ENCODE measurements at regions of chr12 and their contacts with region 1.

Region 1: DNA sequence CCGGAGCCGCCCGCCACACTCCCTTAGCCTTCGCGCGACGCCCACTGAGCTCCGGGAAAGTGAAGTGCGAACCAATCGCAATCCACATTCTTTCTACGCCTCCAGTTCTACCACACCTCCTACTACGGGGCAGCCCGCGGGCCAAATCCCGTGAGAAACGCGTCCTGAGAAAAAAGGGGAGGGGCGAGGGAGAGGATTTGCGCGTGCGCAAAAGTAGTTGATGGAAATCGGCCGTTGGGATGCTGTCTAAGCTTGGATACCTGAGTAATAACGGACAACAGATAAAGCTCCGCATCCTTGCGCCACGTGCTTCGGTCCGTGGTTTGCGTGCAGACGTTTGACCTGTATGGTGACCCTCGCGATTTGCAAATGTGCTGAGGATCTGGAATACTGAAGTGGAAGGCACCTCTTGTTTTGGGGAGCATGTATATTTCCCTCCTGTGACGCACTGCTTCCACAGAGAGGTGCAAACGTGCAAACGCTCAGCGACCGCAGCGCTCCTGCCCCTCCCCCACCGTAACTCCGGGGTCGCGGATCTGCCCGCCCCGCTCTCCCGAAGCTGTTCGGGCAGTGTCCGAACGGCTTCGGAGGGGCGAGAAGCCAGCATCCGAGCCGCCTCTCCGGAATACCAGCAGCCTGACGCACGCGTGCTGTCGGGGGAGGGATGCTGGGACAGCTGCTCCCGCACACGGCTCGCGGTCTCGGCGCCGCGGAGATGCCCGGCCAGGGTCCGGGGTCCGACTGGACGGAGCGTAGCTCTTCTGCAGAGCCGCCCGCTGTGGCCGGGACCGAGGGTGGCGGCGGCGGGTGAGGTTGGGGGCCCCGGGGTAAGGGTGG is at the starts of genes FAM216A and GPN3:
- DNase-seq: peak; percentile 97 to 98
- H3K4me3 ChIP-seq: peak within 1 kb of the TSS; percentile 62
- H3K4me3 Mint-ChIP-seq: peak within 1 kb of the TSS; percentile 82
- H3K27ac Mint-ChIP-seq: peak within 1 kb of the TSS; percentile 94
- H3K4me1 ChIP-seq: no peaks in the 10 kb centered on the region
- H3K4me1 Mint-ChIP-seq: no peaks in the 10 kb centered on the region
- H3K27me3 ChIP-seq: no peaks in the 10 kb centered on the region
- H3K27me3 Mint-ChIP-seq: no peaks in the 10 kb centered on the region
- CTCF ChIP-seq: no peak
- total RNA-seq, gene FAM216A: 13.1 and 15.9 TPM in 2 replicates
- total RNA-seq, gene GPN3: 35.0 and 39.0 TPM in 2 replicates

Region 2: DNA sequence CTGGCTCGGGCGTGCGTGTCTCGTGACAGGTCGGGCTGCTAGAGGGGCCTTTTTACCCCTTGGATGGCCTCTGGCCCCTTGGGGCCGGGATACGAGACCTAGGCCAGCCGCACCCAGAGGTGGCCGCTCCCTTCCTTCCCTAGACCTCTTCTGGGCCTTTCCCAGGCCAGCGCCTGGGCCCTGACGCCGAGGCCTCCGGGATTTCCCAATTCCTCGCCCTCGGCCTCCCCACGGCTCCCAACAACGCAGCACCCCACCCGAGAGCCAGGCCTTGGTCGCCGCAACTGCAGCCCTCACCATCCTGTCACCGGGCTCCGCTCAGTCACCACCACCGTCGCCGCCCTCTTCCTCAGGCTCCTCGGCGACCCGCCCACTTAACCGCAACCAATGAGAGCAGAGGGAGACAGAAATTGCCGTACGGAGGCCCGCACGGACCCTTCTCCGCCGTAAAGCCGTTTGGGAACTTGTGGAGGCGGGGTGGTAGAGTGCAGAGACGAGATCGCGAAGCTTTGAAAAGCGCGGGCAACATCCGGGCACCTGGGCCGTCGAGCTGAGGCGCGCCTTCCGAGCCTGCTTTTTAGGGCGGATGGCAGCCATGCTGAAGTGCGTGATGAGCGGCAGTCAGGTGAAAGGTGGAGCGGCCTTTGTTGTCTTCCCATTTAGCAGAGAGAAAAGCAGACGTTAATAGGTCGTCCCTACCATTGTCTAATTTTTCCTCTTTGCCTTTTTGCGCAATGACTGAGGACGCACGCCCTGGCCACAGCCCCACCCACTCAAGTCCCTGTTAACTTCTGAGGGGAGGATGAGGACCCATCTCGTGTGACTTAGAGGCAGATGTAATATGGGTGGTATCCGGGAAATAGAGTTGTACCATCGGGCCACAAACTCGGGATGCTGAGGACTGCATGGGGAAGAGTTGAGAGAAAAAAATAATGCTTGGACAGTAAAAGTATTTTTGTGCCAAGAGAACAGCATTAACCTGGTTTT is 33.6 kb after region 1 on chr12 and contains the starts of genes RAD9B and VPS29:
- CTCF ChIA-PET with region 1: interaction called, 5 read pairs
- POLR2A ChIA-PET with region 1: interaction called, 36 read pairs
- intact Hi-C with region 1: loop called (anchors 1 kb)
- DNase-seq: peak; percentile 99
- H3K4me3 ChIP-seq: peak within 1 kb of the TSS; percentile 55
- H3K4me3 Mint-ChIP-seq: peak within 1 kb of the TSS; percentile 95
- H3K27ac Mint-ChIP-seq: peak within 1 kb of the TSS; percentile 97
- H3K4me1 ChIP-seq: peaks cover 21% of the 10 kb centered on the region
- H3K4me1 Mint-ChIP-seq: no peaks in the 10 kb centered on the region
- H3K27me3 ChIP-seq: no peaks in the 10 kb centered on the region
- H3K27me3 Mint-ChIP-seq: no peaks in the 10 kb centered on the region
- CTCF ChIP-seq: no peak
- total RNA-seq, gene RAD9B: 2.8 and 3.8 TPM in 2 replicates
- total RNA-seq, gene VPS29: 127 and 132 TPM in 2 replicates

Region 3: DNA sequence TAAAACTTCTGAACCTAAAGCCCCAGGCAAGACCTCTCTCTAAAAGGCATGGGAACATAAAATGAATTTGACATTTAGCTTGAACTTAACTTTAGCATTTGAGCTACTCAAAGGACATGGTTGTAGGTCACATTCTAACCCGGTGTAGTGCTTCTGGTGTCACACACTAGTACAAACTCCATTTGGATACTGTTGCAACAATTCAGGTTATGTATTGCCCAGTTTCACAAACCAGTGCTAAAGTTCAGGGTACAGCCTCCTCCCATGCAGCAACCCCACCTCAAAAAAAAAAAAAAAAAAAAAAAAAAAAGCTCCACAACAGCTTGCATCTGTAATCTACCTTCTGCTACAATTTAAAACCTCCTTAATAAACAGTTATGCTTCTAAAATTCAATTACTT is 106.9 kb after region 1 on chr12:
- CTCF ChIA-PET with region 1: interaction called, 7 read pairs
- POLR2A ChIA-PET with region 1: interaction called, 13 read pairs
- intact Hi-C with region 1: no loop called
- DNase-seq: peak; percentile 46 to 63
- H3K4me3 ChIP-seq: no peak overlapping the region
- H3K4me3 Mint-ChIP-seq: no peak overlapping the region
- H3K27ac Mint-ChIP-seq: no peak overlapping the region
- H3K4me1 ChIP-seq: peaks cover 20% of the 10 kb centered on the region
- H3K4me1 Mint-ChIP-seq: peaks cover 23% of the 10 kb centered on the region
- H3K27me3 ChIP-seq: no peaks in the 10 kb centered on the region
- H3K27me3 Mint-ChIP-seq: no peaks in the 10 kb centered on the region
- CTCF ChIP-seq: no peak

Region 4: GRCh38 chr12:110689281-110690126 is 221.1 kb after region 1 on chr12:
- CTCF ChIA-PET with region 1: no interaction called
- POLR2A ChIA-PET with region 1: no interaction called
- intact Hi-C with region 1: loop called (anchors 10 kb)
- DNase-seq: peak in 1 of 2 experiments; percentile 20
- H3K4me3 ChIP-seq: peak overlapping the region; percentile 51
- H3K4me3 Mint-ChIP-seq: peak overlapping the region; percentile 74
- H3K27ac Mint-ChIP-seq: no peak overlapping the region
- H3K4me1 ChIP-seq: no peaks in the 10 kb centered on the region
- H3K4me1 Mint-ChIP-seq: peaks cover 16% of the 10 kb centered on the region
- H3K27me3 ChIP-seq: no peaks in the 10 kb centered on the region
- H3K27me3 Mint-ChIP-seq: peaks cover 8% of the 10 kb centered on the region
- CTCF ChIP-seq: no peak

Region 5: DNA sequence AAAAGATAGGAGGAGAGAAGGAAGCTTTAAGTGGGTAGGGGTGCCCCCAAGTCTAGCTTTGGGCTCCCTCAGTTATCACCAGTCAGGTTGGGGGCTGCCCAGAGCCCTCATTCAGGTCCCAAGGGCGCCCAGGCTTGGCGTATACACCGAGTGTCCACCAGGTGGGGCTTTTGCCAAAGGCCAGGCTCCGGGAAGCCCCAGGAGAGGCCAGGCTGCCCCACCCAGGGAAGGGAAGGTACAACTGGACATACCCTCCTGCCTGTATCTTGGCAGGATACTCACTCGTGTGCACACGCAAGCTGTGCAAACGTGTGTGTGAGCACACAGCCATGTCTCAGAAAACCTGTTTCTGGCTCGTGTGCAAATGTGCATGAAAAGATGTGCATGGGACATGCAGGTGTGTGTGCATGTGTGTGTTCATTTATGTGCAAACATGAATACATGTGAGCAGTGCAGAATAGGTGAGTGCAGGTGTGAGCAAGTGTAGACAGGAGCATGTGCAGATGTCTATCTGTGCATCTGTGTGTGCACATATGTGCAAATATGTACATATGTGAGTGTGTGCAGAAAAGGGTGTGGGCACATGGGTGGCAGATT is 555.9 kb after region 1 on chr12:
- CTCF ChIA-PET with region 1: no interaction called
- POLR2A ChIA-PET with region 1: no interaction called
- intact Hi-C with region 1: no loop called
- DNase-seq: peak; percentile 72 to 80
- H3K4me3 ChIP-seq: no peak overlapping the region
- H3K4me3 Mint-ChIP-seq: no peak overlapping the region
- H3K27ac Mint-ChIP-seq: no peak overlapping the region
- H3K4me1 ChIP-seq: no peaks in the 10 kb centered on the region
- H3K4me1 Mint-ChIP-seq: peaks cover 4% of the 10 kb centered on the region
- H3K27me3 ChIP-seq: no peaks in the 10 kb centered on the region
- H3K27me3 Mint-ChIP-seq: peaks cover 17% of the 10 kb centered on the region
- CTCF ChIP-seq: peak; percentile 82 to 87